Uterus (tissue), 4 donors: ENCODE measurements at regions of chr11 and their contacts with region 1.

Region 1: GRCh38 chr11:125846188-125846587 is 13.1 kb downstream of the PATE4 start:
- DNase-seq: no peak
- H3K4me3 ChIP-seq: no peak overlapping the region
- H3K27ac ChIP-seq: no peak overlapping the region
- H3K4me1 ChIP-seq: no peaks in the 10 kb centered on the region
- H3K27me3 ChIP-seq: no peaks in the 10 kb centered on the region
- CTCF ChIP-seq: no peak
- POLR2A ChIP-seq: no peak

Region 2: DNA sequence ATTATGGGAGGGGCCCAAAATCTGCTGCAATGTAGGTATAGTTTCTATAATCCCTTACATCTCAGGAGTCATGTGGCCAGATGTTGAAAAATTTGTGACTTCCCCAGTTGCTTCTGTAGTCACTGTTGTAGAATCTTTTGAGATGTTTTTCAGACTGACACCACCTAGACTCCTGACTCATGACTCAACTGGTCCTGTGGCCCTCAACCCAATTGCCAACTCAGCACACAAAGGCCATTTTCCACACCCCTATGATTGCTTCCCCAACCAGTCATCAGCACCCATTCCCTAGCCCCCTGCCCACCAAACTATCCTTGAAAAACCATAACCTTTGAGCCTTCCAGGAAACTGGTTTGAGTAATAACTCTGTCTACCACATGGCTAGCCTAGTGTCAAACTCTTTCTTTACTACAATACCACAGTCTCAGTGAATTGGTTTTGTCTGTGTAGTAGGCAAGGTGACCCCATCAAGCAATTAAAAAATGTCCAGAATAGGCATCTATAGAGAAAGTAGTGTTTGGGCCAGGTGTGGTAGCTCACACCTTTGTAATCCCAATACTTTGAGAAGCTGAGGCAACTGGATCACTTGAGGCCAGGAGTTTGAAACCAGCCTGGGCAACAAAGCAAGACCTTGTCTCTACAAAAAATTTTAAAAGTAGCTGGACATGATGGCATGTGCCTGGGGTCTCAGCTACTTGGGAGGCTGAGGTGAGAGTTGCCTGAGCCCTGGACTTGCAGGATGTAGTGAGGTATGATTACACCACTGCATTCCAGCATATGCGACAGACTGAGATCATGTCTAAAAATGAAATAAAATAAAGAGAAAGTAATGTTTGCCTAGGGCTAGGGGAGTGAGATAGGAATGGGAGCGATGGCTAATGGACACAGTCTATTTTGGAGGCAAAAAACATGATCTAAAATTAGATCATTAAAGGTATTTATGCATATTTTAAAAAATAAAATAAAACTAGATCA is 326.0 kb before region 1 on chr11:
- intact Hi-C with region 1: loop called (anchors 10 kb)
- DNase-seq: no peak
- H3K4me3 ChIP-seq: no peak overlapping the region
- H3K27ac ChIP-seq: no peak overlapping the region
- H3K4me1 ChIP-seq: no peaks in the 10 kb centered on the region
- H3K27me3 ChIP-seq: no peaks in the 10 kb centered on the region
- CTCF ChIP-seq: no peak
- POLR2A ChIP-seq: no peak

Region 3: GRCh38 chr11:125679397-125679796 is 166.8 kb before region 1 on chr11:
- intact Hi-C with region 1: no loop called
- DNase-seq: no peak
- H3K4me3 ChIP-seq: no peak overlapping the region
- H3K27ac ChIP-seq: no peak overlapping the region
- H3K4me1 ChIP-seq: no peaks in the 10 kb centered on the region
- H3K27me3 ChIP-seq: no peaks in the 10 kb centered on the region
- CTCF ChIP-seq: no peak
- POLR2A ChIP-seq: no peak

Region 4: DNA sequence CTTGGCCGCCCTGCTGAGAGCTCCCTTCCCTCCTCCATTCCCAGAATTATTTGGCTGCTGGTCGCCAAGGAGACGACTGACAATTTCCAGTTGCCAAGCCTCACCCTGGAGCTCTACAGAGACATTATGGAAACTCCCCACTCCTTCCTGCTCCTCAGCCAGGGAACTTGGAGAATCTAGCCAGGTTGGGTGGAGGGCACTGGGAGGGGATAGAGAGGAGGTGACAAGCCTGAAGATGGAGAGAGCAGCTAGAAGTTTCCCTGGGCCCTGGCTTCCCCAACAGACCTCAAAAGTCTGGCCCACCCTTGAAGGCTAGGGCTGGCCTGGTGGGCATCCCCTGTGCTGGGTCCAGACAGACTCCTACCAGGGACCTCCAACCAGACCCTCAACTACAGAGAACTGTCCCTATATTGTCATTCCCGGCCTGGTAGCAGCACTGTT is 92.9 kb after region 1 on chr11:
- intact Hi-C with region 1: no loop called
- DNase-seq: peak in 1 of 2 donors; percentile 73
- H3K4me3 ChIP-seq: no peak overlapping the region
- H3K27ac ChIP-seq: peak overlapping the region; percentile 55 to 58
- H3K4me1 ChIP-seq: no peaks in the 10 kb centered on the region
- H3K27me3 ChIP-seq: no peaks in the 10 kb centered on the region
- CTCF ChIP-seq: no peak
- POLR2A ChIP-seq: no peak